ENCODE measurements at regions of chr5 and their contacts with region 1.

Region 1: DNA sequence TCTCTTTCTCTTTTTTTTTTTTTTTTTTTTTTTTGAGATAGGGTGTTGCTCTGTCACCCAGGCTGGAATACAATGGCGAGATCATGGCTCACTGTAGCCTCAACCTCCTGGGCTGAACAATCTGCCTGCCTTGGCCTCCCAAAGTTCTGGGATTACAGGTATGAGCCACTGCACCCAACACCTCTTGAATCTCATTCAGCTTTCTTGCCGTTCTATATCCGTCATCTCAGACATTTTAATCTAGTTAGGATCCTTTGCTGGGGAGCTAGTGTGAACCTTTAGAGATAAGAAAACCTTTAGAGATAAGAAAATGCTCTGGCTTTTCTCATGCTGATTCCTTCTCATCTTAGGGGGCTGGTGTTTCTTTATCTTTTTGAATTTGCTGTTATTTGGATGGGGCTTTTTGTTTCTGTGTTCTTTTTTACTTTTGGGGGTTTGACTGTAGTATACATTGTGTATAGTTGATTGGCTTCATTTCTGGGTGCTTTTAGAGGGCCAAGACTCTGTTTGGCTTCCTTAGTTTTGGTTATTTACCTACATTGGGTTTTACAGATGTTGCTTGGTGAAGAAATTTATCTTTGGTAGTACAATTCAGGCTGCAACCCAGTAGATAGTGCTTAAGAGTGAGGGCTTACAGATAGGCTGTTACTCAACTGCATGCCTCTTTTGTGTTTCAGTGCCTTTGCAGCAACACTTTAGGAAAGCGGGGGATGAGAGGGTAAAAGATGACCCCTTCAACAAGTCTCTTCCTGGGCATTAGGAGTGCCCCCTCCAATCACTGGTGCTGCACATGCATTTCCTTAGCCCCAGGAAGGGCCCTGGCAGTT is 41.9 kb upstream of the SLC36A1 start:
- DNase-seq: no peak
- ATAC-seq: no peak
- H3K4me3 Mint-ChIP-seq: no peak overlapping the region
- H3K27ac Mint-ChIP-seq: no peak overlapping the region
- H3K4me1 Mint-ChIP-seq: no peaks in the 10 kb centered on the region
- H3K27me3 Mint-ChIP-seq: peaks cover 32% of the 10 kb centered on the region

Region 2: DNA sequence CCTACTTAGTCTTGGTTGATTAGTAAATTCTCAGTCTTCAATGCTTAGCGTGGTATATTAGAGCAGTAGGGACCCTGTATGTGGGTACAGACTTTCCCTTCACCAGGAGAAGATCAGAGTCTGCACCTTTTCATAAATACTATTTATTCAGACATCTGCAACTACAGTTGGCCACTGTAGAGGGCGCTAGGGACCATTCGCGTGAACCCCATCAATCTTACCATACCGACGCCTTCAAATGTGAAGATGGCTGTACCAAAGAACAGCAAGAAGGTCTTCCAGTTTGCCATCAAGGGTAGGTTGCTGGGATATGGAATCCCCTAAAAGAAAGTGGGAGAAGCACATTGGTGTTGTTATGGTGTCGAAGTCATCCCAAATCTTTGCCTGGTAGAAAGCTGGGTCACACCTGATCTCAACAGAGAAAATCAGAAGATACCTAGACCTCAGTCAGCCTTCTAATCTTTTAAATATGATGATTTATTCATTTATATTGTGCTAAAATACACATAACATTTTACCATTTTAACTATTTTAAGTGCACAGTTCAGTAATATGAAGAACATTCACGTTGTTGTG is 121.1 kb before region 1 on chr5:
- POLR2A ChIA-PET with region 1: no interaction called
- DNase-seq: no peak
- ATAC-seq: no peak
- H3K4me3 Mint-ChIP-seq: no peak overlapping the region
- H3K27ac Mint-ChIP-seq: no peak overlapping the region
- H3K4me1 Mint-ChIP-seq: peaks cover 2% of the 10 kb centered on the region
- H3K27me3 Mint-ChIP-seq: peaks cover 9% of the 10 kb centered on the region

Region 3: GRCh38 chr5:151431666-151432065 is 26.1 kb after region 1 on chr5:
- POLR2A ChIA-PET with region 1: interaction called, 10 read pairs
- DNase-seq: no peak
- ATAC-seq: no peak
- H3K4me3 Mint-ChIP-seq: no peak overlapping the region
- H3K27ac Mint-ChIP-seq: no peak overlapping the region
- H3K4me1 Mint-ChIP-seq: no peaks in the 10 kb centered on the region
- H3K27me3 Mint-ChIP-seq: peaks cover 24% of the 10 kb centered on the region

Region 4: GRCh38 chr5:151470439-151470838 is 64.9 kb after region 1 on chr5:
- POLR2A ChIA-PET with region 1: no interaction called
- DNase-seq: no peak
- ATAC-seq: no peak
- H3K4me3 Mint-ChIP-seq: no peak overlapping the region
- H3K27ac Mint-ChIP-seq: no peak overlapping the region
- H3K4me1 Mint-ChIP-seq: no peaks in the 10 kb centered on the region
- H3K27me3 Mint-ChIP-seq: no peaks in the 10 kb centered on the region

Measured in activated naive CD8-positive, alpha-beta T cell treated with anti-CD3 and anti-CD28 coated beads, Interleukin-2, amount 10 ng/mL, durations not matched to agents 7 days and 5 days (primary cell).